PC-9 (cell line): ENCODE measurements at regions of chr15 and their contacts with region 1.

Region 1: DNA sequence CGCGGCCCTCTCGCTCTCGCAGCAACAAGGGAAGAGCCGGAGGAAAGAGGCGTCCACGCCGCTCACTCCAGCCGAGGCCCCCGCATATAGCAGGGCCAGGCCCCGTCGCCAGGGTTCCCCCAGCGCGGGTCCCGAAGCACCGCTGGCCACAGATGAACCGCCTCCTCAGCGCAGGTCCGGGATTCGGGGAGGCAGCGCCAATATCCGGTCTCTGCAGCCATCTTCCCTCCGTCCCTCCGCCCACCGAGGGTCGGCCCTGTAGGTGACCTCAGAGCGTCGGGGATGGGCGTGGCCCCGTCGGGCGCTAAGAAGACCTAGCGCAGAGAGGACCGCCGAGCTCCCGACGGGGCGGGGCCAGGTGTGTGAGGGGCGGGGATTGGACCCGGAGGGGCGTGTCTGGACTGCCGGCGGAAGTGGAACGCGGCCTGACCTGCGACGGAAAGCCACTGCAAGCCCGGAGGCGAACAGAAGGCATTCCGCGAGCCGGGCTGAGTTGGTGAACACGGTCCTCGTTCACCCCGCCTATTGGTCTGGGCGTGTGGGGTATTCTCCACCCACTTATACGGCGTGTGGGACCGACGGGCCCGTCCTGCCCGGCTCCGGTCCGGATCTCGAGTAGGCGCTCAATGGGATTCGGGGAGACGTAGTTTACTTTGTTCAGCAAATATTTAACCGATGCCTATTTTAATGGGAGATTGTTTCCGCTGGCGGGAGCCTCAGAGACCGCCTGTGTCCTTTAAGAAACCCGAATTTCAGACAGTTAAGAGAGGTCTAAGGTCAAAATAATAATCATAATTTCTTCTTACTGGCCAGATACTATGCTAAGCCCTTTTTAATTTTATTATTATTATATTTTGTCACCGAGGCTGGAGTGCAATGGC is 26.9 kb upstream of the MTHFS start:
- DNase-seq: peak; percentile 91 to 99
- H3K4me3 ChIP-seq: peak overlapping the region; percentile 75
- H3K27ac ChIP-seq: peak overlapping the region; percentile 77
- H3K4me1 ChIP-seq: 0 out of 2 replicates have a peak, but pooled peaks cover 8% of the 10 kb centered on the region
- H3K27me3 ChIP-seq: no peaks in the 10 kb centered on the region
- CTCF ChIP-seq: no peak

Region 2: GRCh38 chr15:80604583-80605575 is 681.1 kb after region 1 on chr15:
- CTCF ChIA-PET with region 1: no interaction called
- POLR2A ChIA-PET with region 1: interaction called, 11 read pairs
- intact Hi-C with region 1: no loop called
- DNase-seq: no peak
- H3K4me3 ChIP-seq: no peak overlapping the region
- H3K27ac ChIP-seq: no peak overlapping the region
- H3K4me1 ChIP-seq: peaks cover 12% of the 10 kb centered on the region
- H3K27me3 ChIP-seq: no peaks in the 10 kb centered on the region
- CTCF ChIP-seq: no peak